ENCODE measurements at regions of chr15 and their contacts with region 1.

Region 1: GRCh38 chr15:82699726-82700125 is 9.9 kb downstream of the AP3B2 start:
- DNase-seq: peak in 1 of 3 donors; percentile 47
- ATAC-seq: no peak
- H3K4me3 ChIP-seq: no peak overlapping the region
- H3K27ac ChIP-seq: no peak overlapping the region
- H3K4me1 ChIP-seq: no peaks in the 10 kb centered on the region
- H3K27me3 ChIP-seq: no peaks in the 10 kb centered on the region

Region 2: GRCh38 chr15:82663186-82663600 is 36.5 kb before region 1 on chr15:
- intact Hi-C with region 1: no loop called
- DNase-seq: peak; percentile 44 to 85 (median 69)
- ATAC-seq: peak in 1 of 2 donors; percentile 33
- H3K4me3 ChIP-seq: no peak overlapping the region
- H3K27ac ChIP-seq: no peak overlapping the region
- H3K4me1 ChIP-seq: no peaks in the 10 kb centered on the region
- H3K27me3 ChIP-seq: no peaks in the 10 kb centered on the region

Region 3: DNA sequence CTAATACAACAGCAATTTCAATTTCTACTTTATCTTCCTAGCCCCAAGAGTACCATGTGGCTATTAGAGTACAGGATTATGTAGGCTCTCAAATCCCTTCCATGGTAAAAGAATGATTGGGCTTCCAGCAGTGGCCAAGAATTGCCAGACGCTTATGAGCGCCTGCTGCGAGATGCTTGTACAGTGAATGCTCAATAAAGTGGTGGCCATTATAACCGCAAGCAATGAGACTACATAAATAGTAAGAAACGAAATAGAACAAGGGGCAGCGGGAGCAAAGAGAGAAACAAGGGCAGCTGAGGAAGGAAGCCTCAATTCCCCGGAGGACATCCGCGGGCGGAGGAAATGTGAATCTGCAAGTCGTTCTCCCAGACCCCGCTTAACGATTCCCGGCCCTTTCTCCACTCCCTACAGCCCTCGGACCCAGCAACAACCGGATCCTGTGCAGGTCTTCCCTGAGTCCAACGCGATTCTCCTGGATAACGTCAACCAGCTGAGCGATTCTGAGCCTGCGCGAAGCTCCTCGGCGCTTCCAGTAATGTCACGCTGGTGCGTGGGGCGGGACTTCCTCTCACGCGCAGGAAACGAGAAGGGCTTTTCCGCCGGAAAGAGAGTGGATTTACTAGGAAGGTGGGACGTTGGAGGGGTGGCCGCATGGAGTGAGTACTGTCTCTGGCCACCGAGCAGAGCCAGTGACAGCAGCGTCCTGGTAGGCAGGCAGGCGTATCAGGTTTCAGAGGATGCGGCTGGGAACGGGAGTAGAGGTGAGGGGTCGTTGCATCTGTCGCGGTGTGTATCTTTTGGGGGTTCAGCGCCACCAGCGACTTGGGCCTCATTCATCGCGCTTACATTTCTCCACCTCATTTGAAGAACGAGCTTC is 50.5 kb after region 1 on chr15:
- intact Hi-C with region 1: loop called in 1 of 4 experiments (anchors 10 kb)
- DNase-seq: peak; percentile 93 to 96 (median 95)
- ATAC-seq: peak; percentile 99
- H3K4me3 ChIP-seq: peak overlapping the region; percentile 93
- H3K27ac ChIP-seq: peak overlapping the region; percentile 91
- H3K4me1 ChIP-seq: peaks cover 8% of the 10 kb centered on the region
- H3K27me3 ChIP-seq: no peaks in the 10 kb centered on the region

Measured in right cardiac atrium (tissue), 5 donors.